ENCODE measurements at regions of chr21 and their contacts with region 1.

Region 1: GRCh38 chr21:35014302-35015041 is 34.6 kb downstream of the RUNX1 start:
- DNase-seq: no peak
- ATAC-seq: no peak
- H3K4me3 Mint-ChIP-seq: no peak overlapping the region
- H3K27ac Mint-ChIP-seq: peak overlapping the region; percentile 58
- H3K4me1 Mint-ChIP-seq: peaks cover 83% of the 10 kb centered on the region
- H3K27me3 Mint-ChIP-seq: no peaks in the 10 kb centered on the region
- CTCF ChIP-seq: no peak

Region 2: GRCh38 chr21:34592120-34592955 is 422.1 kb before region 1 on chr21:
- CTCF ChIA-PET with region 1: no interaction called
- POLR2A ChIA-PET with region 1: no interaction called
- intact Hi-C with region 1: no loop called
- DNase-seq: no peak
- ATAC-seq: no peak
- H3K4me3 Mint-ChIP-seq: no peak overlapping the region
- H3K27ac Mint-ChIP-seq: no peak overlapping the region
- H3K4me1 Mint-ChIP-seq: peaks cover 7% of the 10 kb centered on the region
- H3K27me3 Mint-ChIP-seq: no peaks in the 10 kb centered on the region
- CTCF ChIP-seq: no peak

Region 3: GRCh38 chr21:35002879-35003722 is 11.4 kb before region 1 on chr21:
- CTCF ChIA-PET with region 1: interaction called, 11 read pairs
- POLR2A ChIA-PET with region 1: interaction called, 6 read pairs
- intact Hi-C with region 1: no loop called
- DNase-seq: no peak
- ATAC-seq: no peak
- H3K4me3 Mint-ChIP-seq: no peak overlapping the region
- H3K27ac Mint-ChIP-seq: peak overlapping the region; percentile 17
- H3K4me1 Mint-ChIP-seq: peaks cover 86% of the 10 kb centered on the region
- H3K27me3 Mint-ChIP-seq: no peaks in the 10 kb centered on the region
- CTCF ChIP-seq: no peak

Region 4: DNA sequence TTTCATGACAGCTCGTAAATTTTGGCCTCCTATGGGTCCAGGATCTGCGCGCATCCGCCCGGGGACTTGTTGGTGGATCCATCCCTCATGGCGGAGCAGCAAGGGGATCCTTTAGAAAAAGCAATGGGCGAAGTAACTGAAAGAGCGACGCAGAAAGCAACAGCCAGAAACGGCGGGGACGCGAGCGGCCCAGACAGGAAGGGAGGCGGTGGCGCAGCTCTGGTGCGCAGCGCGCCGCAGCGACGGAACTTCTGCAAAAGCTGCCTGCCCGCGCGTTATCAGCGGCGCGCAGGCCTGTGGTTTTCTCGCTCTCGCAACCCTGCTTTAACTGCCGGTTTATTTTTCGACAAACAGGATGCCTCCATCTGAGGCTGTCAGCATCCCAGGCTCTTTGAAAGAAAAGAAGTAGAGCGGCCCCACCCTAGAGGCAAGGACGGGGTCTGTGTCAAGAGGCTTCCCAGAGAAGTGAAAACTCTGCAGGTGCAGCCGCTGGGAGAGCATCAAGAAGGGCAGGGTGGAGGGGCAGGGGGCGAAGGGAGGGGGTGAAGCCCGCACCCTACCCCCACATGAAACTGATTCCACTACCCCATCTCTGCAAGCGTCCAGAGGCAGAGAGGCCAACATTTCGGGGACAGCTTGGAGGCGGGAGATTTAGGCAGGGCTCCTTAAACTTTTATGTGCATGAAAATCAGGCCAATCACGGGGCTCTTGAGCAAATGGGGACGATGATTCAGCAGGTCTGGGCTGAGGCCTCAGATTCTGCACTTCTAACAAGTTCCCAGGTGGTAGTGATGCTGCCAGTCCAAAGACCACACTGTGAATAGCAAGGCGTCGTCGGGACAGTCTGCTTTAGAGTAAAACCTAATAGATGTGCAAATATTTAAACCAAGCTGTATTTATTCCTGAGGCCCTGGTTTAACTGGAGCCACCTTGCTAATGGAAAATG is 12.4 kb after region 1 on chr21:
- CTCF ChIA-PET with region 1: interaction called, 12 read pairs
- POLR2A ChIA-PET with region 1: interaction called, 13 read pairs
- intact Hi-C with region 1: no loop called
- DNase-seq: peak; percentile 91
- ATAC-seq: peak; percentile 79
- H3K4me3 Mint-ChIP-seq: peak overlapping the region; percentile 80
- H3K27ac Mint-ChIP-seq: peak overlapping the region; percentile 97
- H3K4me1 Mint-ChIP-seq: peaks cover 80% of the 10 kb centered on the region
- H3K27me3 Mint-ChIP-seq: no peaks in the 10 kb centered on the region
- CTCF ChIP-seq: no peak

Region 5: DNA sequence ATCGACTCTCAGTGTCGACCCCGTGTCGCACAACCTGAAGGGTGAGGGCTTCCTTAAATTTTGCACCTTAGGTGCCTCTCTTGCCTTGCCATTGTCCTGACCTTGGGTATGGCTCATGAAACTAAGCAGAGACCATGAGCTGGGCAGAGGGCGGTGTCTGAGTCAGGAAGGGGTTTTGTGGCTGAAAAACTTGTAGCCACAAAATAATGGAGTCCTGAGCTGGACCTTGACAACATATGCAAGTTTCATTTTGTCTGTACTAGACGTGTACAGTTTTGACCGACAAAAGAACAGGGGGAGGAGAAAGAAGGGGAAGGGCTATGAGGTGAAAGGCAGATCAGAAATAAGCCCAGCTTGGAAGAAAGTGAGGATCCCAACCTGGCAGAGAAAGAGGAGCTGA is 43.0 kb after region 1 on chr21:
- CTCF ChIA-PET with region 1: no interaction called
- POLR2A ChIA-PET with region 1: no interaction called
- intact Hi-C with region 1: no loop called
- DNase-seq: no peak
- ATAC-seq: no peak
- H3K4me3 Mint-ChIP-seq: no peak overlapping the region
- H3K27ac Mint-ChIP-seq: no peak overlapping the region
- H3K4me1 Mint-ChIP-seq: peaks cover 21% of the 10 kb centered on the region
- H3K27me3 Mint-ChIP-seq: no peaks in the 10 kb centered on the region
- CTCF ChIP-seq: no peak

Measured in activated CD8-positive, alpha-beta T cell treated with anti-CD3 and anti-CD28 coated beads for 36 hours (primary cell).